CD14-positive monocyte (primary cell): ENCODE measurements at regions of chr16 and their contacts with region 1.

Region 1: GRCh38 chr16:75110637-75111513 is 5.7 kb downstream of the LDHD start:
- DNase-seq: peak; percentile 80 to 83 (median 83)
- H3K4me3 ChIP-seq: peak overlapping the region in 1 of 3 experiments; percentile 47
- H3K4me3 Mint-ChIP-seq: peak overlapping the region; percentile 62 to 73
- H3K27ac ChIP-seq: peak overlapping the region in 1 of 2 donors; percentile 23
- H3K27ac Mint-ChIP-seq: peak overlapping the region in 6 of 7 donors; percentile 75 to 88 (median 82)
- H3K4me1 ChIP-seq: peaks cover 76 to 78% of the 10 kb centered on the region in 2 donors
- H3K4me1 Mint-ChIP-seq: peaks cover 72% of the 10 kb centered on the region
- H3K27me3 ChIP-seq: peaks cover 0 to 23% of the 10 kb centered on the region in 2 donors
- H3K27me3 Mint-ChIP-seq: peaks cover 22 to 32% (median 26%) of the 10 kb centered on the region in 3 donors
- CTCF ChIP-seq: peak; percentile 91

Region 2: DNA sequence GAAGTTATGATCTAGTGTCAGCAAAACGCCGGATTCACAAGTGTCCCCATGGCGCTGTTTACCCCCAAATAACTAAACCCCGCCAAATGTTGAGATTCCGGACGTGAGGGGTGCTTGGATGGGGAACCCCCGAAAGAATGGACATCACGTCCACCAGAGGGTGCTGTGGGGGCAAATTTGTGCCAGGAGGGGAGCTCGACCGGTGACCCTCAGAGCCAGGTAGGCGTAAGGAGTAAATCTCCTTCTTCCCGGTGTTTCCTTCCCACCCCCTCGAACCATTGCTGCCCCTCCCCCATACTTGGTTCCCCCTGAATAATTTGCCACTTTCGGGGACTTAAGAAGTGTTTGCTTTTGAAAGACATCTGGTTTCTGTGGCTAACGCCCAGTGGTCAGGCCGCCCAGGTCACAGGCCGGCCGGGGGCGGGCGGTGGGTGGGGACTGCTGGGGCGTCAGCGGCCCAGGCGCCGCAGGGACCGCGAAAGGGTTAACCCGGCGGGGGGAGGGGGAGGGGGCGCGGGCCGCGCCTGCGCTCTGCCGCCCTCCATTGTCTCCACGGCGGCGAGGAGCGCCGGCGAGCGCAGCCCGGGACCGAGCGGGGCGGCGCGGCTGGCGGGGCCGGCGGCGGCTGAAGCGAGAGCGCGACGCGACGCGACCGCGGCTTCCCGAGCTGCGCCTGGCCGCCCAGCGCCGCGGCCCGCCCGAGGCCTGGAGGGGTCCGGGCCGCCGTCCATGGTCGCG is 112.2 kb before region 1 on chr16 and contains the start of gene ZNRF1:
- intact Hi-C with region 1: loop called (anchors 2 to 5 kb)
- DNase-seq: peak; percentile 69 to 76 (median 75)
- H3K4me3 ChIP-seq: peak within 1 kb of the TSS; percentile 67 to 91 (median 87)
- H3K4me3 Mint-ChIP-seq: peak within 1 kb of the TSS; percentile 88 to 98
- H3K27ac ChIP-seq: peak within 1 kb of the TSS in 1 of 2 donors; percentile 89
- H3K27ac Mint-ChIP-seq: peak within 1 kb of the TSS; percentile 54 to 94 (median 89)
- H3K4me1 ChIP-seq: peaks cover 25 to 44% of the 10 kb centered on the region in 2 donors
- H3K4me1 Mint-ChIP-seq: peaks cover 35% of the 10 kb centered on the region
- H3K27me3 ChIP-seq: peaks cover 0 to 8% of the 10 kb centered on the region in 2 donors
- H3K27me3 Mint-ChIP-seq: peaks cover 11 to 19% (median 16%) of the 10 kb centered on the region in 3 donors
- CTCF ChIP-seq: peak; percentile 86
- polyA plus RNA-seq, gene ZNRF1: 1.9 to 5.3 (median 4.3) TPM

Region 3: DNA sequence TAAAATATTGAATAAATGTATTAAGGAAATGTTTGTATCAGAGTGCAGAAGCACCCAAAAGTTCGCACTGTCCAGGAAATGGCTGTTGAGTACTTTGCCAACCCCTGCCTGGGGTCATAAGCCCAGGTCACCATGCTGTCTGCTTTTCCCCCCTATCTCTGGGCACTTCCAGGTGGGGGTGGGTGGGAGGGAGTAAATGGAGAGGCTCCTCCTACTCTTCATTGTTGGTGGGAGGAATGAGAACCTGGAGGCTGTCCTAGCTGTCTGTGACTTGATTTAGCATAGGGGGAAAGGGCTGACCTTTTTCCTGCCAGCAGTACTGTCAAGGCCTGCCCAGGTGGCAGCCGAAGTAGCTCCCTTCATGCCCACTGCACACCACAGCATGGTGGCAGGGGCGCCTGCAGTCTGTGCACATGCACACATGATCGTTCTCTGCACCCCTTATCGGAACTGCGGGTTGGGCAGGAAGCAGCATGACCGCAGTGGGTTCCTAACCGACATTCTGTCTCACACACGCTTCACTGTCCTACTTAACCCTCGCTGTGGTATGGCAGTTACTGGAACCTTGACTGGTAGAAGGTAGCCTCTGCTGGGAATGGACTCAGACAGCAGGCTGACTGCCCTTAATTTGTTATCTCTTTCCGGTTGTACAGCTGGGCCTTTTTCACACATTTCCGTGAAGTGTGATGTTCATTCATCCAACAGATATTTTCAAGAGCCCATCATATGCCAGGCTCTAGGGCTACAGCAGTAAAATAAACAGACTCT is 35.8 kb before region 1 on chr16:
- intact Hi-C with region 1: no loop called
- DNase-seq: peak in 2 of 3 donors; percentile 23 to 24
- H3K4me3 ChIP-seq: peak overlapping the region in 1 of 3 experiments; percentile 49
- H3K4me3 Mint-ChIP-seq: peak overlapping the region; percentile 14 to 71
- H3K27ac ChIP-seq: no peak overlapping the region
- H3K27ac Mint-ChIP-seq: peak overlapping the region in 4 of 7 donors; percentile 25 to 67 (median 40)
- H3K4me1 ChIP-seq: peaks cover 24 to 29% of the 10 kb centered on the region in 2 donors
- H3K4me1 Mint-ChIP-seq: peaks cover 42% of the 10 kb centered on the region
- H3K27me3 ChIP-seq: no peaks in the 10 kb centered on the region
- H3K27me3 Mint-ChIP-seq: peaks cover 0 to 3% (median 0%) of the 10 kb centered on the region in 3 donors
- CTCF ChIP-seq: no peak